ENCODE measurements at regions of chr1 and their contacts with region 1.

Region 1: GRCh38 chr1:182381962-182382819 is 9.4 kb downstream of the GLUL start:
- DNase-seq: no peak
- ATAC-seq: peak; percentile 27
- H3K4me3 ChIP-seq: no peak overlapping the region
- H3K27ac ChIP-seq: peak overlapping the region; percentile 16; the same call in 1 of the 3 replicates
- H3K4me1 ChIP-seq: peaks cover 12 to 23% of the 10 kb centered on the region in 2 experiments; a peak in 4 of 5 replicates
- H3K27me3 ChIP-seq: no peaks in the 10 kb centered on the region
- CTCF ChIP-seq: no peak
- EP300 ChIP-seq: no peak
- POLR2A ChIP-seq: peak; percentile 75
- RAD21 ChIP-seq: no peak

Region 2: DNA sequence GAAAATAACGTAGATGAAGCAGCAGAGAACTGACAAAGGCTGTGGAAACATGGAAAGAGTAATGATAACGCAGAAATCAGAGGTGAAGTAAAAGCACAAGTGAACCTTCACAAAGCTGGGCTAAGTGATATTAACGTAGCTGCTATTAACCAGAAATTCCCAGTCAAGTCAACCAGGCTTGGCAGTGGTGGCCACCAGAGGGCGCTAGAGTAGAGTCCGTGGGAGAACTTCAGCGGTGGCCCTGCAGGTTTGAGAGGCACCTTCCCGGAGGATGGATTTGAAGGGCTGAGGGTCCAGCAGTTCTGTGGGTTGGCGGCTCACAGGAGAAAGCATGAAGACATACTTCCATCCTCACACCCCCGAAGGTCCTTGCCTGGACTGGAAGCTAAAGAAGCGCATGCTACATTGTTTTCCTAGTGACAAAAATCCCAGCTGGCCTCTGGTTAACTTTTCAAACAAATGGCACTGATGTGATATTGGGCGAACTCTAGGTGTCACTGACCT is 239.0 kb before region 1 on chr1:
- CTCF ChIA-PET with region 1: no interaction called
- POLR2A ChIA-PET with region 1: interaction called, 137 read pairs
- in situ Hi-C with region 1: no loop called
- intact Hi-C with region 1: no loop called
- DNase-seq: peak; percentile 83 to 93 (median 88)
- ATAC-seq: peak; percentile 92
- H3K4me3 ChIP-seq: no peak overlapping the region
- H3K27ac ChIP-seq: no peak overlapping the region
- H3K4me1 ChIP-seq: peaks cover 12% of the 10 kb centered on the region in 2 experiments
- H3K27me3 ChIP-seq: peaks cover 0 to 4% of the 10 kb centered on the region in 2 experiments; a peak in 2 of 5 replicates
- CTCF ChIP-seq: peak; percentile 97 to 99 (median 98)
- EP300 ChIP-seq: peak; percentile 25; the same call in 1 of the 2 replicates
- POLR2A ChIP-seq: no peak
- RAD21 ChIP-seq: peak; percentile 96 to 100

Region 3: GRCh38 chr1:182363636-182364035 is 18.6 kb before region 1 on chr1:
- CTCF ChIA-PET with region 1: no interaction called
- POLR2A ChIA-PET with region 1: interaction called, 25 read pairs
- in situ Hi-C with region 1: no loop called
- intact Hi-C with region 1: no loop called
- DNase-seq: no peak
- ATAC-seq: no peak
- H3K4me3 ChIP-seq: no peak overlapping the region
- H3K27ac ChIP-seq: no peak overlapping the region
- H3K4me1 ChIP-seq: peaks cover 16 to 32% of the 10 kb centered on the region in 2 experiments
- H3K27me3 ChIP-seq: no peaks in the 10 kb centered on the region
- CTCF ChIP-seq: no peak
- EP300 ChIP-seq: no peak
- POLR2A ChIP-seq: no peak
- RAD21 ChIP-seq: no peak

Region 4: DNA sequence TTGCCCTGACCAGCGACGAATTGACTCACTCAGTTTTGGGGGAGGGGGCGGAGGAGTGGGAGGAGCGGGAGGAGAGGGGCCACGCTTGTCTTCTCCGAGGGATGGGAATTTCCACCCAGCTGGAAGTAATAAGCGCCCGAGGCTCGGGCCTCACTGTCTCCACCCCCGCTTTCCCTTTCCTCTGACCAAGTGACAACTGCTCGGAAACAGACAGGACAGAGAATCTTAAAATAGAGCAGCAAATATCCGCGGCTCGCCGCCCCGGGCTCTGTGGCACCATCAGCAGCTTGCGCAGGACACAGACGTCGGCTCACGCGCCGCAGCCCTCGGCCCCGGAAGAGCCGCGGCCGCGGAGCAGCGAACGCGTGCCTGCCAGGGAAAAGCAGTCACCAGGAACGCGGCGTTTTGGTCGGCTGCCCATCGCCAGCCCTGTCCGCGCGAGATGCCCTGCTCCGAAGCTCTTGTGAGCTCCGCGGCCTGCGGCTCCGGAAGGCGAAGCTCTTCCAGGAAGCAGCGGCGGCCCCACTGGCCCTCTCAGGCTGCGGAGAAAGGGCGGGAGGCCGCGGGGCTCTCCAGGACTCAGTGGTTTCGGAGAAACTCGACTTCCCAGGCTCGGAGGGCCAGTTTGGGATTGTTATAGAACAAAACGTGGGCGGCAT is 232.7 kb after region 1 on chr1:
- CTCF ChIA-PET with region 1: no interaction called
- POLR2A ChIA-PET with region 1: no interaction called
- in situ Hi-C with region 1: no loop called
- intact Hi-C with region 1: no loop called
- DNase-seq: peak; percentile 22 to 38 (median 27)
- ATAC-seq: peak; percentile 70
- H3K4me3 ChIP-seq: peak overlapping the region; percentile 14
- H3K27ac ChIP-seq: no peak overlapping the region
- H3K4me1 ChIP-seq: peaks cover 9 to 15% of the 10 kb centered on the region in 2 experiments; a peak in 4 of 5 replicates
- H3K27me3 ChIP-seq: peaks cover 53 to 77% of the 10 kb centered on the region in 2 experiments
- CTCF ChIP-seq: no peak
- EP300 ChIP-seq: no peak
- POLR2A ChIP-seq: no peak
- RAD21 ChIP-seq: 0 out of 4 replicates have a peak, but pooled peaks of 1 of the 2 experiments have one; percentile 2

Region 5: GRCh38 chr1:182629499-182630096 is 247.4 kb after region 1 on chr1:
- CTCF ChIA-PET with region 1: no interaction called
- POLR2A ChIA-PET with region 1: no interaction called
- in situ Hi-C with region 1: no loop called
- intact Hi-C with region 1: no loop called
- DNase-seq: no peak
- ATAC-seq: no peak
- H3K4me3 ChIP-seq: no peak overlapping the region
- H3K27ac ChIP-seq: no peak overlapping the region
- H3K4me1 ChIP-seq: no peaks in the 10 kb centered on the region; a peak in 1 of 5 replicates
- H3K27me3 ChIP-seq: peaks cover 16 to 34% of the 10 kb centered on the region in 2 experiments
- CTCF ChIP-seq: no peak
- EP300 ChIP-seq: no peak
- POLR2A ChIP-seq: no peak
- RAD21 ChIP-seq: no peak

Measured in K562 (cell line).